B cell (primary cell): ENCODE measurements at regions of chr12 and their contacts with region 1.

Region 1: GRCh38 chr12:116737774-116738700 is at the starts of genes RNFT2 and SPRING1:
- DNase-seq: peak; percentile 99
- ATAC-seq: peak; percentile 95
- H3K4me3 ChIP-seq: peak within 1 kb of the TSS; percentile 62 to 92 (median 76)
- H3K4me3 Mint-ChIP-seq: peak within 1 kb of the TSS; percentile 97
- H3K27ac ChIP-seq: peak within 1 kb of the TSS; percentile 1 to 81
- H3K27ac Mint-ChIP-seq: peak within 1 kb of the TSS; percentile 90
- H3K4me1 ChIP-seq: peaks cover 18 to 20% of the 10 kb centered on the region in 2 donors
- H3K4me1 Mint-ChIP-seq: peaks cover 33% of the 10 kb centered on the region
- H3K27me3 ChIP-seq: no peaks in the 10 kb centered on the region
- H3K27me3 Mint-ChIP-seq: no peaks in the 10 kb centered on the region
- CTCF ChIP-seq: peak; percentile 7
- total RNA-seq, gene RNFT2: 18.2 and 23.0 TPM in 2 replicates
- total RNA-seq, gene SPRING1: 43.7 and 45.9 TPM in 2 replicates

Region 2: GRCh38 chr12:116703214-116703795 is 34.7 kb before region 1 on chr12:
- CTCF ChIA-PET with region 1: no interaction called
- POLR2A ChIA-PET with region 1: no interaction called
- intact Hi-C with region 1: no loop called
- DNase-seq: peak; percentile 74
- ATAC-seq: peak; percentile 81
- H3K4me3 ChIP-seq: no peak overlapping the region
- H3K4me3 Mint-ChIP-seq: no peak overlapping the region
- H3K27ac ChIP-seq: no peak overlapping the region
- H3K27ac Mint-ChIP-seq: no peak overlapping the region
- H3K4me1 ChIP-seq: peaks cover 9 to 11% of the 10 kb centered on the region in 2 donors
- H3K4me1 Mint-ChIP-seq: peaks cover 12% of the 10 kb centered on the region
- H3K27me3 ChIP-seq: peaks cover 0 to 3% (median 0%) of the 10 kb centered on the region in 4 experiments
- H3K27me3 Mint-ChIP-seq: peaks cover 8% of the 10 kb centered on the region
- CTCF ChIP-seq: peak; percentile 98

Region 3: DNA sequence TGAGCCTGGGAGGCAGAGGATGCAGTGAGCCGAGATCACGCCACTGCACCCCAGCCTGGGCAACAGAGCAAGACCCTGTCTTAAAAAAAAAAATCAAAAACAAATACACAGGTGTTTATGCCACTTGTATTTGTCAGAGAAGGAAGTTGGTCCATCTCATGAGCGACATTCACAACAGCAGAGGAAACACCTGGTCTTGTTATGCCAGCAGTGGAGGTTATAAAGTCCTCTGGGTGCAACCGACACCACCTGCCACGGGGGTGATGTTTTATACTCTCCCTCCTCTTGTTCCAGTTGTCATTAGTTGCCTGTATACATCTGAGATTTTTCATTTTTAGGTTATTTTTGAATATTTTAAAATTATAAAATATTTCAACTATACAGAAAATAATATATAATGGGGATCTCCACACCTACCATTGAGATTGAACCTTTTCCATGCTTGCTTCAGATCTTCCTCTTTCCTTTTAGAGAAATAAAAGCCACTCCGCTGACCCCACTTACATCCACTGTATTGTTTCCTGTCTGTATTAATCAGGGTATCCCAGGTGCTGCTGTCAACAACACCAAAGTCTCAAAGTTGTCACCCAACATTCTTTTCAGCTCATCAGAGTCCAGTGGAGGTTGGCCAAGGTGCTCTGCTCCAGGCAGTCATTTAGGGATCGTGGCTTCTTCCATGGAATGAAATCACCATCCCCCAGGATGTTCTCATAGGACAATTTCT is 65.1 kb after region 1 on chr12:
- CTCF ChIA-PET with region 1: no interaction called
- POLR2A ChIA-PET with region 1: no interaction called
- intact Hi-C with region 1: loop called (anchors 5 kb)
- DNase-seq: peak; percentile 80
- ATAC-seq: peak; percentile 85
- H3K4me3 ChIP-seq: peak overlapping the region in 1 of 5 experiments; percentile 22
- H3K4me3 Mint-ChIP-seq: peak overlapping the region; percentile 59
- H3K27ac ChIP-seq: peak overlapping the region; percentile 92 to 93
- H3K27ac Mint-ChIP-seq: peak overlapping the region; percentile 95
- H3K4me1 ChIP-seq: peaks cover 33 to 46% of the 10 kb centered on the region in 2 donors
- H3K4me1 Mint-ChIP-seq: peaks cover 51% of the 10 kb centered on the region
- H3K27me3 ChIP-seq: no peaks in the 10 kb centered on the region
- H3K27me3 Mint-ChIP-seq: no peaks in the 10 kb centered on the region
- CTCF ChIP-seq: no peak

Region 4: DNA sequence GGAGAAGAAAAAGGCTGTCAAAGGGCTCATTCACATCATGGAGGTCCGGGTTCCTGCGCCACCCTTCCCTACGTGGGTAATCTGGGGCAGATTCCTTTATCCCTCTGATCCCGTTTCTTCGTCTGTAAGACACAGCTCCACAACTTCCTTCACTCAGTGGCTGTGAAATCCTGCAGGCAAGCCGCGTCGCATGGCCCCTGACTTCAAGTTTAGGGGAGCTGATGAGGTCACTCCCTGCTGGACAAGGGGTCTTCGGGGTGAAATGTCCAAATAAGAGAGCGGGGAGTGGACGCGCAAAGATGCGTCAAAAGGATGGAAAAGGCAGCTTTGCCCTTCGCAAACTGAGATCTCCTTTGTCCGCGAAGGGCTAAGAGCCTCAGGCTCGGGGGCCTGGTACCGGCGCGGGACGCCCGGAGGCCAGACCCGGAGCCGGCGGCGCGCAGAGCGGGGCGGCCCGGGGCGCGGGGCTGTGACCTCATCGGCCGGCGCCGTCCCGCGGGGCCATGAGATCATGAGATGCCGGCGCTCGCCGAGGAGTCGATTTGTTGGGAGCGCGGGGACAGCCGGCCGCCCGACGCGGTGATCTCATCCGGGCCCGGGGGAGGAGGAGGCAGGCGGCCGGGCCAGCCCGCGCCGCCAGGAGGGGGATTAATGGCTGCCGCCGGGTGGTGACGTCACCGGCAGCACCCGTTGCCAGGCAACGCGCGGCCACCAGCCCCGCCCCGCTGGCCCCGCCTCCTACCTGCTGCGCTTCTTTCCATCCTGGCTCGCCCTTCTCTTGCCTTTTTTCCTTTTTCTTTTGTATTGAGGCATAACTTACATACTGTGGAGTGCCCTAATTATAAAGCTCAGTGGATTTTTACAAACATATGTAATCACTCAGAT is 81.2 kb after region 1 on chr12:
- CTCF ChIA-PET with region 1: no interaction called
- POLR2A ChIA-PET with region 1: no interaction called
- intact Hi-C with region 1: loop called (anchors 1 kb)
- DNase-seq: peak; percentile 95
- ATAC-seq: peak; percentile 84
- H3K4me3 ChIP-seq: peak overlapping the region; percentile 82 to 96 (median 95)
- H3K4me3 Mint-ChIP-seq: peak overlapping the region; percentile 87
- H3K27ac ChIP-seq: peak overlapping the region; percentile 93 to 94
- H3K27ac Mint-ChIP-seq: peak overlapping the region; percentile 93
- H3K4me1 ChIP-seq: peaks cover 47 to 49% of the 10 kb centered on the region in 2 donors
- H3K4me1 Mint-ChIP-seq: peaks cover 59% of the 10 kb centered on the region
- H3K27me3 ChIP-seq: no peaks in the 10 kb centered on the region
- H3K27me3 Mint-ChIP-seq: no peaks in the 10 kb centered on the region
- CTCF ChIP-seq: no peak

Region 5: GRCh38 chr12:116861320-116861719 is 123.3 kb after region 1 on chr12:
- CTCF ChIA-PET with region 1: no interaction called
- POLR2A ChIA-PET with region 1: interaction called, 4 read pairs
- intact Hi-C with region 1: loop called (anchors 1 kb)
- DNase-seq: peak; percentile 77
- ATAC-seq: peak; percentile 67
- H3K4me3 ChIP-seq: no peak overlapping the region
- H3K4me3 Mint-ChIP-seq: peak overlapping the region; percentile 78
- H3K27ac ChIP-seq: no peak overlapping the region
- H3K27ac Mint-ChIP-seq: peak overlapping the region; percentile 86
- H3K4me1 ChIP-seq: peaks cover 21 to 53% of the 10 kb centered on the region in 2 donors
- H3K4me1 Mint-ChIP-seq: peaks cover 65% of the 10 kb centered on the region
- H3K27me3 ChIP-seq: no peaks in the 10 kb centered on the region
- H3K27me3 Mint-ChIP-seq: no peaks in the 10 kb centered on the region
- CTCF ChIP-seq: no peak

Region 6: DNA sequence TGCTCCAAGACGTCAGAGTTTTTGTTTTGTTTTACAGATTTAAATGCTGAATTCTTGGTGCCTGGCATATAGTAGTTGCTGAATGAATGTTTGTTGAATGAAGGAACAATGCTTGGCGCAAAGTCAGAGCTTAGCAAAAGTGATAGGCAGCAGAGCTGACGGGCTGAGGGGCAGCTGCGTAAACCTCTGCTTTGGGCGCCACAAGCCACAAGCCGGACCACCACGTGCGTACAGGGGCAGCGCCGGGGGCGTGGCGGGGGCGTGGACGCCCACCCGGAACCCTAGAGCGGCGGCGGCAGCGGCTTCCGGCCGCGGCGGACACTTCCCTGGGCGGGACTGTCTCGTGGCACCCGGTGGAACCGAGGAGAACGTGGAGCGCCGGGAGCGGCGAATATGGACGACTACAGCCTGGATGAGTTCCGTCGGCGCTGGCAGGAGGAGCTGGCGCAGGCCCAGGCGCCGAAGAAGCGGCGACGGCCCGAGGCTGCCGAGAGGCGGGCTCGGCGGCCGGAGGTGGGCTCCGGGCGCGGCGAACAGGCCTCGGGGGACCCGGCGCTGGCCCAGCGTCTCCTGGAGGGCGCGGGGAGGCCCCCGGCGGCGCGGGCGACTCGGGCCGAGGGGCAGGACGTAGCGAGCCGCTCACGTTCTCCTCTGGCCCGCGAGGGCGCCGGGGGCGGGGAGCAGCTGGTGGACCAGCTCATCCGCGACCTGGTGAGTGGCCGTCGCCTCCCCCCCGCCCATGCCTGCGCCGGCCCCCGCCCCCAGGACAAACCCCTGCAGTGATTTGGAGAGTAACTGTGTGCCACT is 172.8 kb after region 1 on chr12 and contains the start of gene FBXW8:
- CTCF ChIA-PET with region 1: no interaction called
- POLR2A ChIA-PET with region 1: interaction called, 8 read pairs
- intact Hi-C with region 1: loop called (anchors 1 kb)
- DNase-seq: peak; percentile 70
- ATAC-seq: peak; percentile 96
- H3K4me3 ChIP-seq: peak within 1 kb of the TSS; percentile 46 to 89 (median 70)
- H3K4me3 Mint-ChIP-seq: peak within 1 kb of the TSS; percentile 90
- H3K27ac ChIP-seq: peak within 1 kb of the TSS in 1 of 2 donors; percentile 59
- H3K27ac Mint-ChIP-seq: peak within 1 kb of the TSS; percentile 75
- H3K4me1 ChIP-seq: peaks cover 14% of the 10 kb centered on the region in 2 donors
- H3K4me1 Mint-ChIP-seq: peaks cover 33% of the 10 kb centered on the region
- H3K27me3 ChIP-seq: peaks cover 0 to 3% (median 0%) of the 10 kb centered on the region in 4 experiments
- H3K27me3 Mint-ChIP-seq: peaks cover 2% of the 10 kb centered on the region
- CTCF ChIP-seq: no peak
- total RNA-seq, gene FBXW8: 23.5 and 23.9 TPM in 2 replicates